GM12878 (cell line): ENCODE measurements at regions of chr6 and their contacts with region 1.

Region 1: DNA sequence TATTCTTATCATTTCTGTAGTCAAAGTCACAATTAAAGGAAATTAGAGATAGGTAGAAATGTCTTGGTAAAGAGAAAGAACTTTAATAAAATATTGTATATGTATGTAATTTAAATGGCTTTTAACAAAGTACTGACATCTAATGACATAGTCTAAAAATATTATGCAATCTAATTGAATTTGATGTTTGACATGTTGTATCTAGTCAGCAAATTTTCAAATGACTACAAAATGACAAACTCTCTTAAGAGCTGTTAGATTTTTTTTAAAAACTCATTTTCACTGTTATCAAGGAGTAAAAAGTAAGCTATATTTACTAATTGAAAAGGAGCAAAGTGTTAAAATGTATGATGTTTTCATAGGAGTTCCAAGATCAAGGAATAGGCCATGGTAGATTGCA is 176.9 kb downstream of the MEI4 start:
- DNase-seq: no peak
- ATAC-seq: no peak
- H3K4me3 ChIP-seq: no peak overlapping the region
- H3K27ac ChIP-seq: no peak overlapping the region
- H3K4me1 ChIP-seq: no peaks in the 10 kb centered on the region
- H3K27me3 ChIP-seq: no peaks in the 10 kb centered on the region
- CTCF ChIP-seq: no peak
- EP300 ChIP-seq: no peak
- POLR2A ChIP-seq: no peak
- RAD21 ChIP-seq: no peak

Region 2: DNA sequence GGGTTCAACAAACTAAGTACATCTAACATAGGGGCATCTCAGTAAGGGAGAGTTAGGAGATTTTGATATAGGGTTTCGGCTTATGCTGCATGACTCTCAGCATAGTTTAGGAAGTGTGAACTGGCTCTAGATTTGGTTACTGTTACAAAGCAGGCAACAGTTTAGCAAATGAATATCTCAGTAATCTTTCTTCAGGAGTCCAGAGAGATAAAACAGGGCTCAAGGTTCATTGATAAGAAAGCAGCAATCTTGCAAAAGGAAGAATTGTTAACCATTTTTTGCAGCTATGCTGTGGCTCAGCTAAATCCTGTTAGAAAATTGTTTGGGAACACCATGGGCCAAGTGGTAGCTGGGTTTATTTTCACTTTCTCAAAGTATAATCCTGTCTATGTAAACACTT is 15.6 kb before region 1 on chr6:
- CTCF ChIA-PET with region 1: interaction called, 10 read pairs
- POLR2A ChIA-PET with region 1: interaction called, 4 read pairs
- RAD21 ChIA-PET with region 1: interaction called, 3 read pairs
- SMC1A ChIA-PET with region 1: interaction called, 5 read pairs
- in situ Hi-C with region 1: no loop called
- intact Hi-C with region 1: no loop called
- DNase-seq: no peak
- ATAC-seq: no peak
- H3K4me3 ChIP-seq: no peak overlapping the region
- H3K27ac ChIP-seq: no peak overlapping the region
- H3K4me1 ChIP-seq: no peaks in the 10 kb centered on the region
- H3K27me3 ChIP-seq: no peaks in the 10 kb centered on the region
- CTCF ChIP-seq: no peak
- EP300 ChIP-seq: no peak
- POLR2A ChIP-seq: no peak
- RAD21 ChIP-seq: no peak